Lower leg skin (tissue), 4 donors: ENCODE measurements at regions of chr22 and their contacts with region 1.

Region 1: GRCh38 chr22:50341977-50342650 is 1.0 kb upstream of the PPP6R2 start:
- DNase-seq: peak; percentile 86 to 97
- H3K4me3 ChIP-seq: no peak overlapping the region
- CTCF ChIP-seq: peak in 1 of 3 donors; percentile 82
- POLR2A ChIP-seq: no peak

Region 2: DNA sequence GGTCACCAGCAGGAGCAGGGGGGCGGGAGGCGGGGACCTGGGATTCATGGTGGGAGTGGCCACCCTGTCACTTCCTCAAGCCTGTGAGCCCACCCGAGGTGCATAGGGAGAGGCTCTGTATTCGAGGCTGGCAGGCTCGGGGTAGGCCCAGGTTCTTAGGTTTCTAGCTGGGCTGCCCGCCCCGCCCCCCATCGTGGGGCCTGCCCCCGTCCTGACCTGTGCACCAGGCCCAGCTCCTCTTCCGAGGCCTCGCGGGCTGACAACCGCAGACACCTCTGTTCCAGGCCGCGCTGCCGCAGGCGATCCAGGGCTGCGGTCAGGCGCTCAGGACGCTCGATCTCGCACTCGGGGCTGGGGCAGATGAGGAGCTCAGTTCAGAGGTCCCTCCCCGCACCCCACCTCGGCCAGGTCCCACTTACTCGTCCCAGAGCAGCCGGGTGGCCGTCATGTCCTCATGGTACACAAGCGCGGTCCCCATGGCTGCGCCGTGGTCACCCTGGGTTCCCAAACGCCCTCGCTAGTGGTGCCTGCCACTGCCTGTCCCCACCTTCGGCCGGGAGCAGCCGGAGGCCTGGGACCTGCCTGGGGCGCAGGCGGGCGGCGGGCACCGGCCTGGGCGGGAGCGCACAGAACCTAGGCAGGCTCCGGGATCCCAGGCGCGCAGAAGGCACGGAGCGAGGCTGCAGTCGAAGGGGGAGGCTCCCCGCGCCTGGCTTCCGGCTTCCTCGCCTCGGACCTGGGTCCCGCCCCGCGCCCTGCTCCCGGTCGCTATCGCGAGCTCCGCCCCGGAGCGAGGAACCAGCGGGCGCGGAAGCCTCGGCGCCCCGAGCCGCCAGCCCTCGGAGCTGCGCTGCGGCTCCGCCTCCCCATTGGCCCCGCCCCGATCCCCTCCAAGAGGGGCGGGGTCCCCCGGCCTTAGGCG is 91.3 kb before region 1 on chr22 and contains the start of gene HDAC10:
- intact Hi-C with region 1: loop called (anchors 5 kb)
- DNase-seq: peak; percentile 63 to 96
- H3K4me3 ChIP-seq: peak within 1 kb of the TSS; percentile 47
- CTCF ChIP-seq: no peak
- POLR2A ChIP-seq: no peak
- total RNA-seq, gene HDAC10: 36.4 to 60.7 (median 45.7) TPM